CD4-positive, alpha-beta T cell (primary cell): ENCODE measurements at regions of chrX and their contacts with region 1.

Region 1: DNA sequence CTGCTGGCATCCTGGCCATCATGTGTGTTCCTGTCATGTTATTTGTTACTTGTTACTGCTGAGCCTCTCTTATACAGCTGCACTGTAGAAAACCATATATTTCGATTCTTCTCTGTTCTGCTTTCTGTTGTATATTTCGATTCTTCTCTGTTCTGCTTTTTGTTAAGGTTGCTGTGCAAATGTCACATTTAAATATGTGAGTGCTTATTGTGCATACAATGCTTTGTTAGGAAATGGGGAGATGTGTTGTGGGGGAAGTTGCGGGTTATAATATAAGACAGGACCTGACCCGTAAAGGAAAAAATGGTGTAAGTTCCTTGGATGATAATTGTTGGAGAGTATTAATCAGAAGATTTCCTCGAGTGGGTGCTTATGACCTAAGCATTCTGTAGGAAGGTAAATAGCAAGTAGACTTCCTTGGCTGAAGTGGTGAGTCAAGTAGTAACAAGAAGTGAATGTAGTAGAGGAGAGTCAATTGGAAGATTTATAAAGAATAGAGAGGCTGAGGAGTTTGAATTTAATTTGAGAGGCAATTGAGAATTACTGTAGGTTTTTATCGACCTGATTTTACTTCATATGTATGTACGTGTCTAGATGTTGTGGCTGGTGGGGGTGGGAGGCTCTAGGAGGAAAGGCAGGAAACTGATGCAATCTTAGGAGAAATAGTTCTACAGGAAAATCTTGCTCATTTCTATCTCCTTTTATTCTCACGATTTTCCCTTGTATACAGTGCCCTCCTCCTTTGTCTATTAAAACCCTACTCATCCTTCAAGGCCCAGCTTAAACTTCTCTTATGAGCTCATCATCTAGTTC is 8.5 kb downstream of the OGT start:
- DNase-seq: no peak
- ATAC-seq: peak; percentile 18
- H3K4me3 ChIP-seq: peak overlapping the region; percentile 24
- H3K4me3 Mint-ChIP-seq: peak overlapping the region; percentile 85
- H3K27ac ChIP-seq: peak overlapping the region in 1 of 2 donors; percentile 17
- H3K27ac Mint-ChIP-seq: peak overlapping the region; percentile 98
- H3K4me1 ChIP-seq: peaks cover 37% of the 10 kb centered on the region
- H3K4me1 Mint-ChIP-seq: peaks cover 78% of the 10 kb centered on the region
- H3K27me3 ChIP-seq: no peaks in the 10 kb centered on the region
- H3K27me3 Mint-ChIP-seq: no peaks in the 10 kb centered on the region
- CTCF ChIP-seq: no peak

Region 2: DNA sequence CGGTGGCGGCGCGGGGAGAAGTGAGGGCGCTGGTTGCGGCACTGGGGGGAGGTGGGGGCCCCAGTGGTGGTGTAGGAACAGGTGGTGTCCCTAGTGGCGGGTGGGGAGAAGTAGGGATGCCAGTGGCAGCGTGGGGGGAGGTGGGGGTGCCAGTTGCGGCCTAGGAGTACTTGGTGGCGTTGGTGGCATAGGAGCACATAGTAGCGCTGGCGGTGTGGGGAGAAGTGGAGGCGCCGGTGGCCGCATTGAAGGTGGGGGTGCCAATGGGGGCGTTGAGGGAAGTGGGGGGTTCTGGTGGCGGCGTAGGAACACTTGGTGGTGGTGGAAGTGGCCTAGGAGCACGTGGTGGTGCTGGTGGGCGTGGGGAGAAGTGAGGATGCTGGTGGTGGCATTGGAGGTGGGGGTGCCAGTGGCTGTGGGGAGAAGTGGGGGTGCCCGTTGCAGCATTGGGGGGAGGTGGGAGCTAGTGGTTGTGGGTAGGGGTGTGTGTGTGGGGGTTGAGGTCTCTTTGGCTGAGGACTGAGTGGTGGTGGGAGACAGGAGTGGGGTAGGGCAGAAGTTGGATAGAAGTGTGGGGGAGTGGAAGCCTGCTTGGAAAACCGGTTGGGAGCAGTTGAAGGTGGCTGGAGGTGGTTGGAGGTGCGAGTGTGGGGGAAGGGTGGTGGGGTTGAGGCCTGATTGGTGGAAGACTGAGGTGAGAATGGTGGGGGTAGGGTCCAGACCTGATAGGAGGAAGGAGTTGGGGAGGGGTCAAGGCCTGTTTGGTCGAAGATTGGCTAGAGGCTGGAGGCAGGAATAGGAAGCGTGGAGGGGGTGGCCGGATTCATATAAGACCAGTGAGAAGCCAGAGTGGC is 37.9 kb after region 1 on chrX:
- CTCF ChIA-PET with region 1: no interaction called
- POLR2A ChIA-PET with region 1: no interaction called
- intact Hi-C with region 1: loop called in 1 of 2 experiments (anchors 5 kb)
- DNase-seq: peak in 1 of 14 experiments; percentile 6
- ATAC-seq: no peak
- H3K4me3 ChIP-seq: no peak overlapping the region
- H3K4me3 Mint-ChIP-seq: no peak overlapping the region
- H3K27ac ChIP-seq: no peak overlapping the region
- H3K27ac Mint-ChIP-seq: no peak overlapping the region
- H3K4me1 ChIP-seq: peaks cover 3% of the 10 kb centered on the region
- H3K4me1 Mint-ChIP-seq: peaks cover 8% of the 10 kb centered on the region
- H3K27me3 ChIP-seq: no peaks in the 10 kb centered on the region
- H3K27me3 Mint-ChIP-seq: no peaks in the 10 kb centered on the region
- CTCF ChIP-seq: no peak